Activated T-helper 2 cell treated with anti-CD3 and anti-CD28 coated beads, Interferon-gamma antibody, Interleukin-2, Interleukin-4, amounts not matched to agents 10 μg/mL and 5 μg/mL and 100 μg/mL, durations not matched to agents 14 hours and 24 hours and 36 hours (primary cell): ENCODE measurements at regions of chr2 and their contacts with region 1.

Region 1: DNA sequence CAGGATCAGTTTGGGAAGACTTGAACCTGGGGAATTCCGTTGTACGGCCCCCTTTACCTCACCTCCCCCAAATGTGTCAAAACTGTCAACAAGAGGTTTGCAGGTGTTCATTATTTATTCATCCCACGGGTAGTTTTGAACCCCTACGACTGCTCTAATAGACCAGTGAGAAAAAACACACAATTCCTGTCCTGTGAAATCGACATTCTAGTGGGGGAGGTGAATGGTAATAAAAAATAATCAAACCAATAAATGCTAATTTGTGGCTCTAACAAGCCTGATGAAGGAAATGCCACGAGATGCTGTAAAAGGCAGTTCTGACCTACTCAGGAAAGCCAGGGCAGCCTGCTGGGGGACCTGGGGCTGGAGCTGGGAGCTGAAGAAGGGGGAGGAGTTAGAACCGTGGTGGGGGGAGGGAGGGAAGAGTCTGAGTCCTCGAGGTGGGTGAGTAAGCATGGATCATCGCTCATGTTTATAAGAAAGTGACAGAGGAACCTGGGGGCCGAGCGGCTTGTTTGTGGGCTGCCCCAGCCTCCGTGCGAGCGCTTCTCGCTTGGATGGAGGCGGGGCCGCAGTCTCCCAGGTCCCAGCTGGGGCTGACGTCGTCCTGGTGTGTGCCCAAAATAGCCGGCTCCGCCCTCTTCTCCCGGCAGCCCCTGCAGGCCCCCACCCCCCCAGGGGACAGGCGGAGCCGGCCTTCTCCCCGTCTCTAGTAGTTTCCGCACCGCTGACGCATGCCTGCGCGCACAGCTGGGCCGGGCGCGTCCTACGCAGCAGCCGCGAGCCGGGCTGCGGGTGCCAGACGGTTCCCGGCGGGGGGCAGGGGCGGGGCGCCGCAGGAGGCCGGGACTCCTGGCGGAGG is at the start of gene DNAJB2:
- DNase-seq: peak; percentile 98
- H3K4me3 Mint-ChIP-seq: peak within 1 kb of the TSS; percentile 85
- H3K27ac Mint-ChIP-seq: peak within 1 kb of the TSS; percentile 91
- H3K4me1 Mint-ChIP-seq: peaks cover 39% of the 10 kb centered on the region
- H3K27me3 Mint-ChIP-seq: peaks cover 3% of the 10 kb centered on the region
- total RNA-seq, gene DNAJB2: 49.8 and 55.6 TPM in 2 replicates

Region 2: DNA sequence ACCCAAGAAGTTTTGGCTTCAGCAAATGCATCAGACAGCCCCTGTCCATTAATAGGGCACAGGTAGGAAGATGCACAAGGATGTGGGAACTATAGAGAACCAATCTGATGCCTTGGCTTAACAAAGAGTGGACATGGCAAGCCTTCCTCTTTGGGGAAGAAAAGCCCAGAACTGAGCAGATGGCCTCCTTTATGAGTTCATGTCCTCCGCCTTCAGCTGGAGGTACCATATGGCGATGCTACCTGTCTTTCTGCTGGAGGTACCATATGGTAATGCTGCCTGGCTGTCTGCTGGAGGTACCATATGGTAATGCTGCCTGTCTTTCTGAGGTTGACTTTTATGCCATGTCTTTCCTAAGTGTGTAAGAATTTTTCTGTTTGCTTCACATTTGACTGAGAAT is 94.8 kb before region 1 on chr2:
- intact Hi-C with region 1: no loop called
- DNase-seq: no peak
- H3K4me3 Mint-ChIP-seq: no peak overlapping the region
- H3K27ac Mint-ChIP-seq: no peak overlapping the region
- H3K4me1 Mint-ChIP-seq: peaks cover 16% of the 10 kb centered on the region
- H3K27me3 Mint-ChIP-seq: no peaks in the 10 kb centered on the region

Region 3: DNA sequence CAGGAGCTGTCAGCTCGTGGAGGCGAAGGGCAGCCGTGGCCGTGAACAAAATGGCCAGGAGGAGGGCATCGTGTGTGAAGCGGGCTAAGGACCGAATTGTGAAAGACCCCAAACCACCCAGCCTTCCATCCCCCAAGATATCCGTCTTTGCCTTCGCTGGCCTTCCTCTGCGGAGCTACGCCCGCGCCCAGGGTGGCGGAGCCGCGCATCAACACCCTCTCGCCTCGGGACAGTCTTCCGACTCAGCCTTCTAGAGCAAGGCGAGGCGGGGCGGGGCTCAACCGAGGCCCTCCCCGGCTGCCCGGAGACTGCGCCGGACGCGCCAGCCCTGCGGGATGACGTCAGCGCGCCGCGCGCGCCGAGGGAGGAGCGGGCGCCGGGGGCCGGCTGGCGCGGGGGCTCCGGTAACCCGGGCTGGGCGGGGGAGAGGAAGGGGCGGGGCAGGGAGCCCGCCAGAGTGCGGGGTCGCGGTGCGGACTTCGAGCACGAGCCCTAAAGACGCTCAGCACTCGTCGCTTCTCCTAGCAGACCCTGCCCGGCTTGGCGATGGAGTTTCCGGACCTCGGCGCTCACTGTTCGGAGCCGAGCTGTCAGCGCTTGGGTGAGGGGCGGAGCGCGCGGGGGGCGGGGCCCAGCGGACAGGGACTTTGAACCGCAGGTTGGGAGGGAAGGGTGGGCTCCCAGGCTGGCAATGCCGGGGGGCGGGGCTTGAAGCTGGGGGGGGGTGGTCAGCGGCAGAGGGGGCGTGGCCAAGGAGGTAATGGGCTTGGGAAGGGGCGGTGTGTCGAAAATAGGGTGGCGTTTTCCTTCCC is 72.2 kb before region 1 on chr2 and contains the start of gene ZFAND2B:
- intact Hi-C with region 1: loop called (anchors 1 kb)
- DNase-seq: peak; percentile 94
- H3K4me3 Mint-ChIP-seq: peak within 1 kb of the TSS; percentile 84
- H3K27ac Mint-ChIP-seq: peak within 1 kb of the TSS; percentile 90
- H3K4me1 Mint-ChIP-seq: peaks cover 38% of the 10 kb centered on the region
- H3K27me3 Mint-ChIP-seq: no peaks in the 10 kb centered on the region
- total RNA-seq, gene ZFAND2B: 27.3 and 33.5 TPM in 2 replicates

Region 4: DNA sequence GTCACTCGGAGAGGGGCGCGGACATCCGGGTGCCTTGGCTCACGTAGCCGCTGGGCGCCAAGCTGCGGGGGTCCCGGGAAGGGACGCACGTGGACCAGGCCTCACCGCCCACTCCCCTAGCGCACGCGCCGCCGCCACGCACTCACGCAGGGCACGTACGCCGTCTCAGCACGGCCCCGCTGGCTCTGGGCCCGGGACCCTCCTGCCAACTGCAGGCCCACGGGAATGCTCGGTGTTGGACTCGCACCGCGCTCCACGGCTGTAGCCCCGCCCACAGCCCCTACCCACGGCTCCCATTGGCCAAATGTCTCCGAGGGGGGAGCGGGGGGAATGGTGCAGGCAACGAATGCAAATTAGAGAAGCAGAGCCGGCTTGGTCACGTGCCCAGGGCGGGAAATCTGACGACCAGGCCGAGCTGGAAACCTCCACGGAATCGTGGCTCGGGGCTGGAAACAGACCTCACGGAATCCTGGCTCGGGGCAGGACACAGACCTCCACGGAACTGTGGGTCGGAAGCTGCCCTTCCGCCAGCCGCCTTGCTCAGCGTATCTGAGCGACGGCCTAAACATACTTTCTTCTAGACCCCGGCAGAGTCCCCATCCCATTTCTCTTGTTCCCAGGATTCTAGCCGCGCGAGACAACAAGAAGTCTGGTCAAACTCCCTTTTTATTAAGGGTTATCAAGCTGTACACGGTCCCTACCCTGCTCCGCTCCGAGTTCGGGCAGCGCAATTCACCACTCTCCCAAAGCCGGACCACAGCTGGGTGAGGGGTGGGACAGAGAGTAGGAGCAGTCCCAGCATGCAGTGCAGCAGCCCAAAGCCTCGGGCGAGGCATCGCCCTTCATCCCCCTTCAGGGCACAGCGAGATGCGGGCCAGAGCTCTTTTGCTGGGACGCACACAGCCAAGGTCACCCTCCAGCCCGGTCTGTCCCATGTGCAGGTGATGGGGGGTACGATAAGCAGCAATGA is 59.9 kb before region 1 on chr2 and contains the start of gene ABCB6:
- intact Hi-C with region 1: loop called (anchors 2 kb)
- DNase-seq: peak; percentile 81
- H3K4me3 Mint-ChIP-seq: peak within 1 kb of the TSS; percentile 82
- H3K27ac Mint-ChIP-seq: peak within 1 kb of the TSS; percentile 55
- H3K4me1 Mint-ChIP-seq: peaks cover 22% of the 10 kb centered on the region
- H3K27me3 Mint-ChIP-seq: no peaks in the 10 kb centered on the region
- total RNA-seq, gene ABCB6: 22.1 and 25.4 TPM in 2 replicates

Region 5: DNA sequence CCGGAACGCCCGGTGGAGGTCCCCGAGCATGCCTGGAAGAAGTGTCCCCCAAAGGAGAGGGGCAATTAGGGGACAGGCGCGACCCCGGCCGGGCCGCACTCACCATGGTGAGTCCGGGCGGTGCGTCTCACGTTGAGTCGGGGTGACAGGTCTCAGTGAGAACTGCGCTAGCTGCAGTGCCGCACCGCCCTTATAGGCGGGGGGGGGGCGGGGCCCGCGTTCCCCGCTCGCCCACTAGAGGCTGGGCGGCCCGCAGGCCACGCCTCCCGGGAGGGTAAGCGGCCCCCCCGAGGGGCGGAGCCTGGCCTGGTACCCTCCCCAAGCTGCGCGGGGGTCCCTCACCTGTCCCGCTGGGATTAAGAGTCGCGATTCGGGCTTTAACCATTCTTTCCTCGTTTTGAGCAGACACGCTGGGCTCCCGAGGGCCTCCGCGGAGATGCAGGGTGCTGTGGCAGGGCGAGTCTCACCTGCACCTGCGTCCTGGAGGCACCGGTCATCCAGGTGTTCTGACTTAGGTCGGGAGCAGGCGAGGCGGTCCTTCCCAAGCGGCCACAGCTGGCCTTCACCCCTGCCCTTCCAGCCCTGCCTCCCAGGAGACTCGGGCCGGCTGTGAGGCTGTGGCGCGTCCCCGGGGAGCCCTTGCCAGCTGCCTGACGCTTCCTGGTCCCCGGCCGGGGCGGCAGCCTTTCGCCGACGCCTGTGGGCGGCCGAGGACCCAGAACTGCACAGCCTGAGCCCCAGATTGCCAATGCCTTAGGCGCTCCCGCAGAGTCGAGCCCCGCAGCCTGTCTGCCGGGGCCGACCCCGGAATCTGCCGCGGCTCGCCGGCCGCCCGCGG is 24.9 kb before region 1 on chr2 and contains the start of gene TUBA4A:
- intact Hi-C with region 1: loop called (anchors 1 kb)
- DNase-seq: peak; percentile 84
- H3K4me3 Mint-ChIP-seq: peak within 1 kb of the TSS; percentile 77
- H3K27ac Mint-ChIP-seq: peak within 1 kb of the TSS; percentile 92
- H3K4me1 Mint-ChIP-seq: peaks cover 46% of the 10 kb centered on the region
- H3K27me3 Mint-ChIP-seq: no peaks in the 10 kb centered on the region
- total RNA-seq, gene TUBA4A: 220 and 231 TPM in 2 replicates

Region 6: GRCh38 chr2:219294356-219295351 is 15.8 kb after region 1 on chr2:
- intact Hi-C with region 1: loop called (anchors 1 kb)
- DNase-seq: peak; percentile 85
- H3K4me3 Mint-ChIP-seq: peak overlapping the region; percentile 79
- H3K27ac Mint-ChIP-seq: peak overlapping the region; percentile 87
- H3K4me1 Mint-ChIP-seq: peaks cover 11% of the 10 kb centered on the region
- H3K27me3 Mint-ChIP-seq: peaks cover 1% of the 10 kb centered on the region

Region 7: DNA sequence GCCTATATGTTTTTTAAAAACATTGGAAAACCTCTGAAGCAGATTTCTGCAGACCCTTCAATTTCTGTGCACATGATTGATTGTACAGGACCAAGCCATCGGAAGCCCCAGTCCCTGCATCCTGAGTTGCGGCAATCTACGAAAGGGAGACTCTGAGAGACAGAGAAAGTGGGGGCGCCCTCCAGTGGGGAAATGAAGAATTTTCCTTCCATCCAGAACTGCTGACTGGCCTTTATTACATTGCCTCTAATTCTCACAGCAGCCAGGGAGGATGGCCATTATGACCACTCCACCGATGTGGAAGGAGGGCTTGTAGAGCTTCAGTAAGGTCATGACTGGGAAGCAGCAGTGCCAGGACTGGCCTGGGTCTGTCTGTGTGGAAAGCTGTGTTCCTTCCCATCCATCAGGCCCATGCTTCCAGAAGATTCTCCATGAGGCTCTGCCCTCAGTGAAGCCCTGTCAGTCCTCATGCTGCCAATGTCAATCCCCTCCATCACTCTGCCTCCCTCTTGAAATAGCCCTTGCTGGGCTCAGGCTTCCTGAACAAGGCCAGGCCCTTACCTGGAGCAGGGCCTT is 73.7 kb after region 1 on chr2:
- intact Hi-C with region 1: loop called (anchors 2 kb)
- DNase-seq: peak; percentile 48
- H3K4me3 Mint-ChIP-seq: no peak overlapping the region
- H3K27ac Mint-ChIP-seq: no peak overlapping the region
- H3K4me1 Mint-ChIP-seq: peaks cover 2% of the 10 kb centered on the region
- H3K27me3 Mint-ChIP-seq: peaks cover 27% of the 10 kb centered on the region